Ovary (tissue), 10 donors: ENCODE measurements at regions of chr14 and their contacts with region 1.

Region 1: DNA sequence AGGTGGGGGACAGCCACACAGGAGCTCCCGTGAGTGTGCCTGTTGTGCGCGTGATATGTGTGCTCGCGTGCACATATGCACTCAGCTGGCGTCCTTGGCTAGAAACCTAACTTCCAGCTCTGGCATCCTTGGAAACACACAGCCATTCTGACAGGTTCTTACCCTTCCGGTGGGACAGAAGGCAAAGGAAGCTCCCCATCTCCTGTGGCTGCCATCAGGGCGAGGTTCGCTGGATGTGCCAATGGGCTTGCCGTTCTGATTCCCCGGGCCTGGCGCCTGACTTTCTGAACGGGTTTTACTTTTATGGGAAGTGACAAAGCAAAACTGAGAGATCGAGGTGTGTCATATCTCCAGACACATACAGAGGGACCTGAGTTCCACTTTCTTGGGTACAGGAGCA is 124.7 kb downstream of the PAPOLA start:
- DNase-seq: peak in 1 of 5 donors; percentile 1
- H3K4me3 ChIP-seq: no peak overlapping the region
- H3K27ac ChIP-seq: no peak overlapping the region
- H3K4me1 ChIP-seq: no peaks in the 10 kb centered on the region
- H3K27me3 ChIP-seq: no peaks in the 10 kb centered on the region
- CTCF ChIP-seq: no peak
- EP300 ChIP-seq: no peak
- POLR2A ChIP-seq: no peak

Region 2: DNA sequence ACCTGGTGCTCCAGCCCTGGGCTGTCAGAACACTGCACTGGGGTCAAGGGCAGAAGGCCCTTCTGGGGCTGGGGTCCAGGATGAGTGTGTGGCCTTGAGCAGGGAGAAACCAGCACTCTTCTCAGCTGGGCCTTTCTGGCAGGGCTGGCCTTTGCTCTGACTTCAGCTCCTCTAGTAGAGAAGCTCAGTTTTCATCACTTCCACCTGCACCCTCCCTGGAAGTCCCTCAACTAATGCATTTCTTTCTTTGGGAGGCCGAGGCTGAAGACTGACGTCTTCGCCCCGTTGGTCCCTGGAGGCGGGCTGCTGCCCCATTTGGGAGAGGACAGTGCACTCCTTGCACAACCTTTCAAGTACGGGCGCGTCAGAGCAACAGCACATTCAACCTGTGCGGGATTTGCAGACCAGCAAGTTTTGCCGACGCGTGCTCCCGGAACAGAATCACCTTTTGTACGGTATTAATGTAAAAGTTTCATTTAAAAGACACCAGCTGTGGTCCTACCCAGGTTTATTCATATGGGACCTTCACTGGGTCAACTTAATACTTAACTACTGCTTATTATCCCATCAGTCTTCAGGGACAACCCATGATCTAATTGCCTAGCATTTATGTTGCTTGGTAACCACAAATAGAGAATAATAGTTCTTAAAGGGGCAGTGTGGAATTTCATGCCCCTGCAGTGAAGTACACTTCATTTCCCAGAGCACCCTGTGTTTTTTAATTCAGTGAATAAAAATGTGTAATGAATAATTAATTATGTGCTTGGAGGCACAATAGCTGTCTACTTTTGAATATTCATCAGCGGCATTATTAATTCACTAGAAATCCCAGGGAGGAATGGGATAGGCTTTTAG is 35.4 kb after region 1 on chr14:
- intact Hi-C with region 1: loop called in 1 of 4 experiments (anchors 2 kb)
- DNase-seq: no peak
- H3K4me3 ChIP-seq: no peak overlapping the region
- H3K27ac ChIP-seq: no peak overlapping the region
- H3K4me1 ChIP-seq: no peaks in the 10 kb centered on the region
- H3K27me3 ChIP-seq: no peaks in the 10 kb centered on the region
- CTCF ChIP-seq: no peak
- EP300 ChIP-seq: no peak
- POLR2A ChIP-seq: no peak

Region 3: GRCh38 chr14:97290977-97291376 is 664.1 kb after region 1 on chr14:
- intact Hi-C with region 1: no loop called
- DNase-seq: no peak
- H3K4me3 ChIP-seq: no peak overlapping the region
- H3K27ac ChIP-seq: no peak overlapping the region
- H3K4me1 ChIP-seq: no peaks in the 10 kb centered on the region
- H3K27me3 ChIP-seq: no peaks in the 10 kb centered on the region
- CTCF ChIP-seq: no peak
- EP300 ChIP-seq: no peak
- POLR2A ChIP-seq: no peak